Colonic mucosa (tissue), 4 donors: ENCODE measurements at regions of chr19 and their contacts with region 1.

Region 1: GRCh38 chr19:43651758-43652545 is 12.3 kb upstream of the CADM4 start:
- DNase-seq: peak; percentile 61
- H3K4me3 ChIP-seq: no peak overlapping the region
- H3K27ac ChIP-seq: no peak overlapping the region
- H3K4me1 ChIP-seq: no peaks in the 10 kb centered on the region
- H3K27me3 ChIP-seq: no peaks in the 10 kb centered on the region
- CTCF ChIP-seq: peak; percentile 74

Region 2: DNA sequence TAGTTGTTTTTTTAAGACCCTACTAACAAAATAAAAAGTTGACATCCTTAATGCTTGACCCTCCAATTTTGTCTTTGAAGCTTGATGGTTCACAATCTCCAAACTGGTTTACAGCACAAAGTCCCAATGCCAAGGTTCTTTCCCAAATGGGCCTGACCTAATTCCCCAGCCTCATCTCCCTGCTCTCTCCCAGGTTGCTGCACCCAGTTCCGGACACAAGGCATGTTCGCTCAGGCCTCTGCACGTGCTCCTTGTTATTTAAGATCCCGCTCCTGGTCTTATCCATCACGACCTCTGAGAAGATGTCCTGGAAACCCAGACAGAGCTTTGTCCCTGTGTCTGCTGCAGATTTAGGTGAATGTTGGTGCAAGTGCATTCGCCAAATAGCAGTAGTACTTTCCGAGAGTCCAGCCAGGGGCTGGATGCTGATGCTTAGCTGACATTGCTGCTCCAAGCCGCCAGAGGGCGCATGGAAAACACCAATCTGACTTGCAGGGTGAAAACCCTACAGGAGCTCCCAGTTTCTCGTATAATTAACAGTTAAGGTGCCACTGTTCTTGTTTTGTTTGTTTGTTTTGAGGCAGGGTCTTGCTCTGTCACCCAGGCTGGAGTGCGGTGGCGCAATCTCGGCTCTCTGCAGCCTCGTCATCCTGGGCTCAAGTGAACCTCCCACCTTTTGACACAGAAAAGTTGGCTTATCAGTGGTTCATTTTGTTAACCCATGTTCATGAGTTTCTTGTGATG is 205.0 kb before region 1 on chr19:
- intact Hi-C with region 1: loop called (anchors 5 kb)
- DNase-seq: peak; percentile 81
- H3K4me3 ChIP-seq: no peak overlapping the region
- H3K27ac ChIP-seq: no peak overlapping the region
- H3K4me1 ChIP-seq: no peaks in the 10 kb centered on the region
- H3K27me3 ChIP-seq: no peaks in the 10 kb centered on the region
- CTCF ChIP-seq: peak; percentile 97

Region 3: GRCh38 chr19:43555185-43555770 is 96.7 kb before region 1 on chr19:
- intact Hi-C with region 1: loop called (anchors 5 kb)
- DNase-seq: peak; percentile 86
- H3K4me3 ChIP-seq: no peak overlapping the region
- H3K27ac ChIP-seq: no peak overlapping the region
- H3K4me1 ChIP-seq: no peaks in the 10 kb centered on the region
- H3K27me3 ChIP-seq: no peaks in the 10 kb centered on the region
- CTCF ChIP-seq: peak; percentile 67

Region 4: DNA sequence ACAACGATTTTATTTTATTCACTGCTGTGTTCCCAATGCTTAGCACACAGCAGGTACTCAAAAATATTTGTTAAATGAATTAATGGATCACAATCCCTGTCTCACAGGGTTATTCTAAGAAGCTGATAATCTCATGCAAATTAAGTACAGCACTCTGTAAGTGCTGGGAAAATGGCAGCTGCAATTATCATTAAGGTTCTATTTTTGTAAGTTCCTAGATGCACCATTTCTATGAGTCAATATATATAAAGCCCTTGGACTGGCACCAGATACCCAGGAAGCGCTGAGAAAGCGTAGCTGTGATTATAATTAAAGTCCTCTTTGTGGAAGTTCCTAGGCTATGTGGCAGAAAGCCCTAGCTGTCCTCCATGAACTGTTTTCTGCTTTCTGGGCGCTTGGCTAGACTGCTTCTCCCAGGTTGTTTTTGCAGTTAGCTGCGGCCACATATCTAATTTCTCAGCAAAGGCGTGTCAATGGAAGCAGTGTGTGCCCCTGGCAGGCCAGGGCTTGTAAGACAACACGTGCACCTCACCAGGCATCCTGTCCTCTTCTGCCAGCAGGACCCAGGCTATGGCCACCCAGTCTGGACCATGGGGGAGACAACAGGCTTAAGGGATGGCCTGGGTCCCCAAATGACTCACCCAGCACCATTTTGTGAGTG is 45.3 kb before region 1 on chr19:
- intact Hi-C with region 1: loop called (anchors 10 kb)
- DNase-seq: no peak
- H3K4me3 ChIP-seq: no peak overlapping the region
- H3K27ac ChIP-seq: no peak overlapping the region
- H3K4me1 ChIP-seq: no peaks in the 10 kb centered on the region
- H3K27me3 ChIP-seq: no peaks in the 10 kb centered on the region
- CTCF ChIP-seq: no peak

Region 5: GRCh38 chr19:43723588-43723987 is 71.6 kb after region 1 on chr19:
- intact Hi-C with region 1: no loop called
- DNase-seq: no peak
- H3K4me3 ChIP-seq: no peak overlapping the region
- H3K27ac ChIP-seq: no peak overlapping the region
- H3K4me1 ChIP-seq: no peaks in the 10 kb centered on the region
- H3K27me3 ChIP-seq: no peaks in the 10 kb centered on the region
- CTCF ChIP-seq: peak; percentile 30